ENCODE measurements at regions of chr14 and their contacts with region 1.

Region 1: GRCh38 chr14:49767562-49768300 is at the start of gene KLHDC2:
- DNase-seq: peak; percentile 92
- H3K4me3 ChIP-seq: peak within 1 kb of the TSS; percentile 85 to 97
- H3K27ac ChIP-seq: peak within 1 kb of the TSS; percentile 96
- H3K4me1 ChIP-seq: peaks cover 13 to 16% of the 10 kb centered on the region in 2 experiments; a peak in 3 of 4 replicates
- H3K27me3 ChIP-seq: no peaks in the 10 kb centered on the region
- CTCF ChIP-seq: peak; percentile 58
- EP300 ChIP-seq: peak; percentile 11 to 70; a peak in 2 of 4 replicates
- RAD21 ChIP-seq: no peak
- polyA plus RNA-seq, gene KLHDC2: 41.1 and 52.0 TPM in 2 replicates

Region 2: DNA sequence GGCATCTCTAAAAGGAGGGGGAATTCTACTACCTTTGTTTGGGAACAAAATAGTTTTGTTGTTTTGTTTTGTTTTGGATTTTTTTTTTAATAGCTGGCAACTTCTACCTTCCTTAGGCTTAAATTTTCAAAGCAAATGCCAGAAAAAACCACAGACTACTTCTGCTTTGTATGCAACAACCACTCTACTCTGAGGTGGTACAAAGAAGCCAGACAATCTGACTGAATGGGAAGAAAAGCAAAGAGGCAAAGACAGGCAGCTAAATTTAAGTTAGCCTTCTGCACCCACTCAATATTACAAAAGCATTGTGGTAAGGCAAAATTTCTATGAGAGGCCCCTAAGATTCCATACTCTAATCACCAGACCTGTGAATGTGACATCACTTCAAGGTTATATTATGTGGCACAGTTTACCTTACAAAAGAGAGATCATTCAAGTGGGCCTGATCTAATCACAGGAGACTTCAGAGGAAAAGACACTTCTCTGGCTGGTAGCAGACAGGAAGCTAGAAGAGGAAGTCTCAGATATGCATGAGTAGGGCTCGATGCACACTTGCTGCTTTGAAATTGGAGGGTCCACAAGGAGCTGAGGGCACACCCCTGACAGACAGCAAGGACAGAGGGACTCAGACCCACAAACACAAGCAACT is 748.1 kb before region 1 on chr14:
- CTCF ChIA-PET with region 1: no interaction called
- POLR2A ChIA-PET with region 1: no interaction called
- DNase-seq: no peak
- H3K4me3 ChIP-seq: no peak overlapping the region
- H3K27ac ChIP-seq: no peak overlapping the region
- H3K4me1 ChIP-seq: no peaks in the 10 kb centered on the region
- H3K27me3 ChIP-seq: no peaks in the 10 kb centered on the region
- CTCF ChIP-seq: no peak
- EP300 ChIP-seq: no peak
- RAD21 ChIP-seq: no peak

Region 3: DNA sequence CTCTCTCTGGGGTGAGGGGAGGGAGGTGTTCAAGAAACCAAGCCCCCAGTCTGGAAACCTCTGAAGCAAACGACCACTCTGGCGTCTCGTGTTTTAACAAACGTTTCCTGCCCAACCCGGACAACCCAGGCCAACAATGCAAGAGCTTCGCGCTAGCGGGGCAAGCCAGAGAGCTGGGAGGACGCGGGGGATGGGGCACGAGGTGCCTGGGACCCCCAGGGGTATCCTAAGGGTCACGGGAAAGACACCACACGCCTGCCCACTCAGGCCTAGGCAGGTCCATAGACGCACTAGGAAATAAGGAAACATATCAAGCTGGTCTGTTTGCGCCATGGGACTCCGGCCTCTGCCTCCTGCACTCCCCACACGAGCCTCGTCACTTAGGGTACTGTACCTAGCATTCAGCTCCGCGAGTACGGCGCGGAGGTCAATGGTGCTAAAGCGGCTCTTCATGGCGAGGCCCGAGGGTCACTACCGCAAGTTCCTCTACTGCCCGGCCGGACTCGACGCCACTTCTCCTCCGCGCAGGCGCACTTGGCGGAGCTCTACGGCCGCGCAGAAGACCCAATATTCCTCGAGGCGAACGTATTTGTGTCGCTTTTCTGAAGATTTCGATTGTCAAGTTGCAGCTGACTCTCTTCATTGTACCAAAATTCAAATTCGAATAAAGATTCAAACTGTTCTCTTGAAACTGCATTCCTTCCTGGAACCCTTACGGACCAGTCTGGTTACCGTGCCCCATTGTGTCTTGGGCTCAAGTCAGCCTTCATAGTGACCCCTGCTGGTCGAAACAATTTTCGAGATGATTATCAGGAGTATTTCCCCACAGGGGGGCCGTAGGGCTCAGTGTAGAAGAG is 84.8 kb after region 1 on chr14 and contains the start of gene NEMF:
- CTCF ChIA-PET with region 1: interaction called, 10 read pairs
- POLR2A ChIA-PET with region 1: interaction called, 6 read pairs
- DNase-seq: peak; percentile 84
- H3K4me3 ChIP-seq: peak within 1 kb of the TSS; percentile 85 to 87
- H3K27ac ChIP-seq: peak within 1 kb of the TSS; percentile 80 to 87
- H3K4me1 ChIP-seq: peaks cover 0 to 3% of the 10 kb centered on the region in 2 experiments; a peak in 3 of 4 replicates
- H3K27me3 ChIP-seq: no peaks in the 10 kb centered on the region
- CTCF ChIP-seq: peak; percentile 96
- EP300 ChIP-seq: no peak
- RAD21 ChIP-seq: no peak
- polyA plus RNA-seq, gene NEMF: 14.0 and 15.4 TPM in 2 replicates

Region 4: DNA sequence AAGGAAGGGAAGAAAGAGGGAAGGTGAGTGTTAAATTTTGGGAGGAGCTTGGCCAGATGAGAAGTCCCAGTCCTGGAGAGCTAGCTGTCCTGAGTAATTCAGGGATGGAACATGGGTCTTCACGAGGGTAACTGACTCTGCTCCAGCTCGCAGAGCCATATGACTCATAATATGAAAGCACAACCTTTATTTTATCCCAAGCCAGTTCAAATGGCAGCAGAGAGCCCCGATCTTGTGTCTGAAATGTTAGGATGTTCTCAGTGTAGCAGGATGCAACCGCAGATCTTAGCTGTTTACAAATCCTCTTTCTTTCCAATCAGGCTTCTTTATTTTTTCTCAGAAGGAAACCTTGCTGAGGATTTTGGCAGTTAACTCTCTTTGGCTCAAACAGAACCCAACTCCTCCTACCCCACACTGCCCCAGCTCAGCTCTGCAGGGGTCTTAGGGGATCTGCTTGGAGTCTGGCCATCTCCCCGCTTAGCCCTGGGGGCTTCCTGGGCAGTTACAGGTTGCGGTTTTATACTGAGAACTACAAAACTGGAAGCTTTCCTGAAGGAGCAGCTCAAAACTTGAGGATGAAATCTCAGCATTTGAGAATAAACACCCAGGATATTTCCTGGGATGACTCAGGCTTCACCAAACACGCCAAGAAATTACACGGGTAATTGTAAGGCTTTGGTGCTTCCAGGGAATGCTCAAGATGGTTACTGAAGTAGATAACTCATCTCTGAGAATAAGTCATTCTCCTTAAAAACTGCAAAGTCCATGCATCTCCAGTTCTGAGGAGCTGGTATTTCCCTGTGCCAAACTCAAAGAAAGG is 256.1 kb after region 1 on chr14:
- CTCF ChIA-PET with region 1: no interaction called
- POLR2A ChIA-PET with region 1: no interaction called
- DNase-seq: no peak
- H3K4me3 ChIP-seq: peak overlapping the region in 1 of 2 experiments; percentile 35; a peak in 1 of 4 replicates
- H3K27ac ChIP-seq: peak overlapping the region; percentile 58 to 97; a peak in 3 of 4 replicates
- H3K4me1 ChIP-seq: peaks cover 0 to 11% of the 10 kb centered on the region in 2 experiments; a peak in 1 of 4 replicates
- H3K27me3 ChIP-seq: no peaks in the 10 kb centered on the region
- CTCF ChIP-seq: no peak
- EP300 ChIP-seq: peak in 1 of 2 experiments; percentile 67; a peak in 2 of 4 replicates
- RAD21 ChIP-seq: no peak

Measured in SK-N-SH (cell line).